Activated CD4-positive, alpha-beta memory T cell treated with anti-CD3 and anti-CD28 coated beads, Interleukin-2, amount 10 ng/mL, durations not matched to agents 7 days and 5 days (primary cell): ENCODE measurements at regions of chr3 and their contacts with region 1.

Region 1: DNA sequence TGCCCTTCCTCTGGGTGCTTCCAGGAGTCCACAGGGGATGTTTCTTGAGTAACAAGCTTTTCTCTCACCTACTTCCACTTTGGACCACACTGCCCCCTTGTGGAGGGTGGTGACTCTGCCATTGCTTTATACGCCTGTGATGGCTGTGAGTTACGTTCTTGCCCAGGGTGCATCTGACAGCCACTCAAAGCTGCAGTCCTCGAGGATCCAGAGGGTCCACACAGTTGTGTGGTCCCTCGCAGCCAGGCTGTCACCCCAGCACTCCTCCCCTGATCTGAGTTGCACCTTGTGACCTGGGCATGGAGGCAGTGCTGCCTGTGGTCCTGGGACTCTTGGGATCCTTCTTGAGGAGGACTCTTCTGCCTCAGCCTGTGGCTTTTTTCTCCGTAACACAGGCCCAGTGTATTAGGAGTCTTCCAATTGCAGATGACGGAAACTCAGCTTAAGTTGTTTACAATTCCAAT is 23.4 kb downstream of the FOXL2 start:
- DNase-seq: peak; percentile 85
- H3K4me3 Mint-ChIP-seq: no peak overlapping the region
- H3K27ac Mint-ChIP-seq: no peak overlapping the region
- H3K4me1 Mint-ChIP-seq: peaks cover 3% of the 10 kb centered on the region
- H3K27me3 Mint-ChIP-seq: peaks cover 6% of the 10 kb centered on the region

Region 2: GRCh38 chr3:138417559-138417982 is 506.0 kb before region 1 on chr3:
- CTCF ChIA-PET with region 1: interaction called, 11 read pairs
- POLR2A ChIA-PET with region 1: no interaction called
- DNase-seq: peak; percentile 66
- H3K4me3 Mint-ChIP-seq: no peak overlapping the region
- H3K27ac Mint-ChIP-seq: no peak overlapping the region
- H3K4me1 Mint-ChIP-seq: peaks cover 1% of the 10 kb centered on the region
- H3K27me3 Mint-ChIP-seq: peaks cover 20% of the 10 kb centered on the region

Region 3: DNA sequence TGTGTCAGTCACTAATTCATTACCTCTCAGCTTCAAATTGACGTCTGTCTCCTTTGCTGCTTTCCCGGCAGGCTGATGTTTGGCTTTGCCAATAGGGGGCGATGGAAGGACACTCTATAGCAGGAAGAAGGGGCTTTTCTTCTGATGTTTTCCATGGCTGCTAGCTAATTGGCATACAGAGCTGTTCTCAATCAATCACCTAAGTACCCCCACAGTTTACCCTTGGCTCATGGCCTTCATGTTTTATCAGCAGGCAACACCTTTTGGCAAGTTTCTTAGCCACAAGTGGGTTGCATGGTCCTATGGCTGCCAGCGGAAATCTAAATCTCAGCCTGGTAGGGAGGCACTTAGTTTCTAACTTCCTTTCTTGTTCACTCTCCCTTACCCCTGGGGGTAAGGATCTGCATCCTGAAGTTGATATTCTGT is 444.1 kb before region 1 on chr3:
- CTCF ChIA-PET with region 1: interaction called, 17 read pairs
- POLR2A ChIA-PET with region 1: no interaction called
- DNase-seq: peak; percentile 55
- H3K4me3 Mint-ChIP-seq: no peak overlapping the region
- H3K27ac Mint-ChIP-seq: no peak overlapping the region
- H3K4me1 Mint-ChIP-seq: no peaks in the 10 kb centered on the region
- H3K27me3 Mint-ChIP-seq: peaks cover 8% of the 10 kb centered on the region

Region 4: DNA sequence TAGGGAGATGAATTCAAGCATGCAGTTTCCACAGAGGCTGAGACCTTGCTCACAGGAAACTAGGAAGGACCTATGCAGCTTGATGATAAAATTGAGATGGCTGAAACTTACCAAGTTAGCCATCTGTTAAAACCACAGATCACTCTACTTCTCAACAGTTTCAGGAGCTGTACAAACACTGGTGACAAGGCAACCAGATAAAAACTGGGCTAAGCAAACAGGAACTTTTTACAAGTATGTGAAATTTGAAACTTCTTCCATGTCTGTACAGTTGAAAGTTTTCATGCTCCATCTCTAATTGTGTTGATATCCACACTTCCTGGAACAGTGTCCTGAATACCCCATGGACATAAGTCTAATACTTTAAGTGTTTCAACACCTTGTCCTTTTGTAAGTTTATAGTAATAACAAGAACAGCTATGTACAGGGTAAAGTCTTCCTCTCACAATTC is 236.8 kb before region 1 on chr3:
- CTCF ChIA-PET with region 1: interaction called, 405 read pairs
- POLR2A ChIA-PET with region 1: no interaction called
- DNase-seq: no peak
- H3K4me3 Mint-ChIP-seq: no peak overlapping the region
- H3K27ac Mint-ChIP-seq: no peak overlapping the region
- H3K4me1 Mint-ChIP-seq: peaks cover 10% of the 10 kb centered on the region
- H3K27me3 Mint-ChIP-seq: no peaks in the 10 kb centered on the region

Region 5: DNA sequence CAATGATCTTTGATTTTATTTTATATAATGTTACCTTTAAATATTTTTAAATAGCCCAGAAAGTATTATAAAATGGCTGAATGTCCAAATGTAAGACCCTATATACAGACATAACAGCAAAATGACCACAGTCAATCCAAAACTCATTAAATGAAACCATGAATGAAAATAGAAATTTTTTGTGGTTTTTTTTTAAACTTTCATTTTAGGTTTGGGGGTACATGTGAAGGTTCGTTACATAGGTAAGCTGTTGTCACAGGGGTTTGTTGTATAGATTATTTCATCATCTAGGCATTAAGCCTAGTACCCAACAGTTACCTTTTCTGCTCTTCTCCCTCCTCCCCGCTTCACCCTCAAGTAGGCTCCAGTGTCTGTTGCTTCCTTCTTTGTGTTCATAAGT is 206.2 kb before region 1 on chr3:
- CTCF ChIA-PET with region 1: interaction called, 10 read pairs
- POLR2A ChIA-PET with region 1: no interaction called
- DNase-seq: no peak
- H3K4me3 Mint-ChIP-seq: no peak overlapping the region
- H3K27ac Mint-ChIP-seq: no peak overlapping the region
- H3K4me1 Mint-ChIP-seq: peaks cover 17% of the 10 kb centered on the region
- H3K27me3 Mint-ChIP-seq: no peaks in the 10 kb centered on the region

Region 6: GRCh38 chr3:138854940-138855339 is 68.6 kb before region 1 on chr3:
- CTCF ChIA-PET with region 1: no interaction called
- POLR2A ChIA-PET with region 1: no interaction called
- DNase-seq: no peak
- H3K4me3 Mint-ChIP-seq: no peak overlapping the region
- H3K27ac Mint-ChIP-seq: no peak overlapping the region
- H3K4me1 Mint-ChIP-seq: no peaks in the 10 kb centered on the region
- H3K27me3 Mint-ChIP-seq: peaks cover 3% of the 10 kb centered on the region

Region 7: DNA sequence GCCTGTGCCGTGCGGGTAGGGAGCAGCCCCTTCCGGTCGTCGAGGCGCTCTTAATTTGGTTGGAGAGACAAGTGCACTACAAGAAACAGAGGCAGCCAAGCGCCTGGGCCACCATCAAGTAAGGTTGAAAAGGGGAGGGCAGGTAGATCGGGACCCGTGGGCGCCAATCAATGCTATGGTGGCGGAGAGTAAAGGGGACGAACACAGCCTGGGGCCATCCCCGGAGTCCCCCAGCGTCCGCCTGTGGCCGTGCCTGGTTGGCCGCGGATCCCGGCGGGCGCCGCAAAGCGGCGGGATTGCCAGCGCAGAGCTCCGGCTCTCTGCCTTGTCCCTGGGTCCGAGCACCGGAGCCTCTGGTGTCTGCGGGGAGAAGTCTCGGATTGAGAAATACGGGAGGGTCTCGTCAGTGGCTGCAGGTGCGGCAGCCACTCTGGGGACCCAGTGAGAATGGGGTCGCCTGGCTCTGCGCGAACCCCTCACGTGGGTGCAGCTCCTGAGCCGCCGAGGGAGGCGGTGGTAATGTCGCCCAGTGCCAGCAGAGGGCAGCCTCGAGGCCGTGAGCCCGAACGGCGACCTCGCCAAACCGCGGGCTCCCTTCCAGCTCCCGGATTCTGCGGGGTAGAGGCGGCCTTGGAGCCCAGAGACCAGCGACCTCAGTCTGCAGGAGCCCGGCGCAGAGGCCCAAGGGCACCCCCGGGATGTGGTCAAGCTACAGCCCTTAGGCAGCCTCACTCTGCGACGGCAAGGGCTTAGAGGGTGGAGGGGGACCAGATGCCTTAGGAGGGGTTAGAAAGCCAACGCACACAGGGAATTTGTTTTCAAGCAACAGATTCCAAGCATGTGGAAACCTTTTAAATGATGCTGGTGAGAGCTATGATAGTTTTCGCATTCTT is 12.5 kb after region 1 on chr3:
- CTCF ChIA-PET with region 1: interaction called, 54 read pairs
- POLR2A ChIA-PET with region 1: no interaction called
- DNase-seq: peak; percentile 67
- H3K4me3 Mint-ChIP-seq: peak overlapping the region; percentile 46
- H3K27ac Mint-ChIP-seq: peak overlapping the region; percentile 35
- H3K4me1 Mint-ChIP-seq: peaks cover 26% of the 10 kb centered on the region
- H3K27me3 Mint-ChIP-seq: peaks cover 77% of the 10 kb centered on the region

Region 8: DNA sequence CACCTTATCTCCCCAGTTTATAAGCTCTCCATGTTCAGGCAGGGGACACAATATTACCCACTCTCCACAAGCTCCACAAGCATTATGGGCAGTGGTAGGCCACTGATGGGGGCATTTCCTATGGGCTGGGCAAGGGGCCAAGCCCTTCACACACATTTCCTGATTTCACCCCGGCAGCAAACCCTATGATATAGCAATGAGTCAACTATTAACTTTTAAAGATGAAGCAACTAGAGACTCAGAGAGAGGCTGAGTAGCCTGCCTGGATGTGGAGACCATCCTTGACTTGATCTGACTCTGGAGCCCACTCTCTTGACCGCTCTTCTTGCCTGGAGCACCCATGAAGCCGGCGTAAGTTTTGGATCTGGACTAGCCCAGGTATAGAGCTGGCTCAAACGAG is 50.9 kb after region 1 on chr3:
- CTCF ChIA-PET with region 1: no interaction called
- POLR2A ChIA-PET with region 1: no interaction called
- DNase-seq: no peak
- H3K4me3 Mint-ChIP-seq: no peak overlapping the region
- H3K27ac Mint-ChIP-seq: no peak overlapping the region
- H3K4me1 Mint-ChIP-seq: no peaks in the 10 kb centered on the region
- H3K27me3 Mint-ChIP-seq: peaks cover 6% of the 10 kb centered on the region